Activated CD4-positive, alpha-beta T cell treated with anti-CD3 and anti-CD28 coated beads for 36 hours (primary cell): ENCODE measurements at regions of chr14 and their contacts with region 1.

Region 1: DNA sequence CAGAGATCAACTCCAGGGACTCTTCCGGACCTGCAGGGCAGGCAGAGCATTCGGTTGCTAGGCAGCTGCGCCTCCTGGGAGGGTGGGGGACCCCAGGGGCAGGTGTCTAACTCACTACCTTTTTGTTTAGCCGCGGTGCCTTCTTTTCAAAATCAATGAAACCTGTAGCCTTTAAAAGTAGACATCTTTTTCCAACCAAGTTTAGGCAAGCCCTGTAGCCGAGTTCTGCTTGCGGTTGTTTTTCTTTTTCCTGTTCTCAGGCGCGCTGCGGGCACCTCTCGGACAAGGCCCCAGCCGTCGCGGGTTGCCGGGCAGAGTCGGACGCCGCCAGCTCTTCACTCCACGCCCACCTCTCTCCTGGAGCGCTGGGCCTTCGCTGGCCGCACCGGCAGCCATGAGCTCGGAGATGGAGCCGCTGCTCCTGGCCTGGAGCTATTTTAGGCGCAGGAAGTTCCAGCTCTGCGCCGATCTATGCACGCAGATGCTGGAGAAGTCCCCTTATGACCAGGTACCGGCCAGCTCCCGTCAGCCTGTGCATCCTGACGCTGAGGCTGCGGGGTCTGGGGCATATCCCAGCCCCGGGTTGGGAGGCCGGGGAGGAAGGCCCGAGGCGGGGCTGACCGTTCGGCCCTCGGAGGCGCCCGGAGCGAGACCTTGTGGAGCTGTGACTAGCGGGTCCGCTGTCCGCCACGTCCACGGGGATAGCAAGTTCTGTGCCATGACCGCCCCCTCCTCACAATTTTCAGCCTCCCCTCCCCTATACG is at the start of gene TTC8:
- DNase-seq: peak; percentile 90
- ATAC-seq: peak; percentile 97
- H3K4me3 Mint-ChIP-seq: peak within 1 kb of the TSS; percentile 81
- H3K27ac Mint-ChIP-seq: peak within 1 kb of the TSS; percentile 94
- H3K4me1 Mint-ChIP-seq: peaks cover 8% of the 10 kb centered on the region
- H3K27me3 Mint-ChIP-seq: peaks cover 3% of the 10 kb centered on the region
- total RNA-seq, gene TTC8: 2.9 to 4.4 TPM

Region 2: GRCh38 chr14:88551094-88551870 is 273.2 kb before region 1 on chr14:
- CTCF ChIA-PET with region 1: no interaction called
- POLR2A ChIA-PET with region 1: no interaction called
- intact Hi-C with region 1: loop called in 1 of 2 experiments (anchors 2 kb)
- DNase-seq: peak; percentile 71
- ATAC-seq: peak; percentile 70
- H3K4me3 Mint-ChIP-seq: peak overlapping the region; percentile 63
- H3K27ac Mint-ChIP-seq: no peak overlapping the region
- H3K4me1 Mint-ChIP-seq: peaks cover 13% of the 10 kb centered on the region
- H3K27me3 Mint-ChIP-seq: peaks cover 37% of the 10 kb centered on the region

Region 3: DNA sequence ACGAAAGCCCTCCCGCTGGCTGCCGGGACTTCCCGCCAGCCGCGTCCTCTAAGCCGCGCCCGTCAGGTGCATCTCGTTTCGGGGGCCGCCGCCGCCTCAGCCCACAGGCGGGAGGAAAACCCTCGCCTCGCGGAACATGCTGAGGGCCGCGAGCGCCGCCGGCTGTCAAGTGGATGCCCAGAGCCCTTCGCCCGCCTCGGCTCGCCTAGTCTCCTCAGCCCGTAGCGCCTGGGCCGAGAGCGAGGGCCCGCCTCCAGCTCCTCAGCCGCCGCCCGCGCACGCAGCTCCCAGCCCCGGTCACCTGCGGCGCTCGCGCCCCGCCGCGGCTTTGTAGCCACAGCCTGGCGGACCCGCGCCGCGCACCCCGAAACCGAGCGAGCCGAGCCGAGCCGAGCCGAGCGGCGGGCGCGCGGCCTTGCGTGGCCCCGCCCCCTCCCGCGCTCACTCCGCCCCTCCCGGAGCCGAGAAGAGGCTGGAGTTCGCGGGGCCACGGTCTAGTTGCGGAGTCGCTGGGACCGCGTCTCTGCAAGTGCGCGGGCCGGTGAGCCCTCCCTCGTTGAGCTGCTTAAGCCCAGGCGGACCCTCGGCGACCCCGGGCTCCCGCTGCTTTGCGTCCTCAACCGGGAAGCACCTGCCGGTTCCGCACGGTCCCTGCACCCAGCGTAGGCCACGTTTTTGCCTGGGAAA is 31.8 kb before region 1 on chr14 and contains the start of gene EML5:
- CTCF ChIA-PET with region 1: interaction called, 5 read pairs
- POLR2A ChIA-PET with region 1: interaction called, 9 read pairs
- intact Hi-C with region 1: loop called (anchors 1 kb)
- DNase-seq: peak; percentile 90
- ATAC-seq: peak; percentile 76
- H3K4me3 Mint-ChIP-seq: peak within 1 kb of the TSS; percentile 87
- H3K27ac Mint-ChIP-seq: peak within 1 kb of the TSS; percentile 87
- H3K4me1 Mint-ChIP-seq: peaks cover 26% of the 10 kb centered on the region
- H3K27me3 Mint-ChIP-seq: no peaks in the 10 kb centered on the region
- total RNA-seq, gene EML5: 8.1 TPM

Region 4: GRCh38 chr14:90331497-90332435 is 1507.3 kb after region 1 on chr14 and contains the start of gene NRDE2:
- CTCF ChIA-PET with region 1: no interaction called
- POLR2A ChIA-PET with region 1: no interaction called
- intact Hi-C with region 1: loop called in 1 of 2 experiments (anchors 2 kb)
- DNase-seq: peak; percentile 99
- ATAC-seq: peak; percentile 99
- H3K4me3 Mint-ChIP-seq: peak within 1 kb of the TSS; percentile 89
- H3K27ac Mint-ChIP-seq: peak within 1 kb of the TSS; percentile 93
- H3K4me1 Mint-ChIP-seq: peaks cover 23% of the 10 kb centered on the region
- H3K27me3 Mint-ChIP-seq: peaks cover 2% of the 10 kb centered on the region
- total RNA-seq, gene NRDE2: 22.8 to 25.3 TPM